Activated T-helper 1 cell treated with anti-CD3 and anti-CD28 coated beads, Interleukin-12 subunit alpha, Interleukin-12 subunit beta, Interleukin-2, Interleukin-4 antibody, amounts not matched to agents 30 ng/mL and 10 ng/mL and 1 ng/mL, durations not matched to agents 14 hours and 24 hours and 36 hours (primary cell): ENCODE measurements at regions of chr3 and their contacts with region 1.

Region 1: DNA sequence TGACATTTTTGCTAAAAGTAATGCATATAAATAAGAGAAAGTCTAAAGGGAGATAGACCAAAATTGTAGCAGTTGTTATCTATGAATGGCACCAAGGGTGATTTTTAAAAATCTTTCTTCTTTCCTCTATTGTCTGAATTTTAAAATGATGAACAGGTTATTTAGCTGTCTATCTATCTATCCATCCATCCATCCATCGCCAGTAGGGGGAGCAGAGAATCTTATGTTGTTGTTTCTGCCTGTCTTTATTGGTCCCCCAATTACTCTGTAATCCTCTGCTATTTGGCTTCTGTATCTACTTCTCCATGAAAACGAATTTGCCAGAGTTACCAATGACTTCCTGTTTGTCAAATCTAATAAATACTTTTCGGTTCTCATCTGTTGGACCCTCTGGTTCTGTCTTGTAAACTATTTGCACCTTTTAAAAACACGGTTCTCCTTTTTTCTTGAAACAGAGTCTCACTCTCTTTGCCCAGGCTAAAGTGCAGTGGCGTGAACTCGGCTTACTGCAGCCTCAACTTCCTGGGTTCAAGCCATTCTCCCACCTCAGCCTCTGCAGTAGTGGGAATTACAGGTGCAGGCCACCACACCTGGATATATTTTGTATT is 86.0 kb downstream of the ECT2 start:
- DNase-seq: no peak
- H3K4me3 Mint-ChIP-seq: no peak overlapping the region
- H3K27ac Mint-ChIP-seq: no peak overlapping the region
- H3K4me1 Mint-ChIP-seq: no peaks in the 10 kb centered on the region
- H3K27me3 Mint-ChIP-seq: peaks cover 15% of the 10 kb centered on the region

Region 2: DNA sequence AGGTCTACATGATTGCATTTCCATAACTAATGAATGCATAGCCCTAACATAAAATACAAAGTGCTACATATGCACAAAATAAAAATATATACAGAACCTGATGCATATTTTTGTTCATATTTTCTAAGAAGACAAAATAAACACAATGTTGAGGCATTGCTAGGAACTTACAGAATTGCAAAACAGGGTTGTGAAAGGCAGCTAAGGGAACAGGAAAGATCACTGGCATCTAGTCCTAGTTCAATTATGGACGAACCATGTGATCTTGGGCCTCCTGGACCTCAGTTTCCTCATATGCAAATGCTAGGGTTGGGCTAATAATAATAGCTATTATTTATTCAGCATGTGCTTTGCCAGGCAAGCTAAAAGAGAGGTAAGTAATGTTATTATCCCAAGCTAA is 110.1 kb before region 1 on chr3:
- intact Hi-C with region 1: no loop called
- DNase-seq: no peak
- H3K4me3 Mint-ChIP-seq: no peak overlapping the region
- H3K27ac Mint-ChIP-seq: no peak overlapping the region
- H3K4me1 Mint-ChIP-seq: no peaks in the 10 kb centered on the region
- H3K27me3 Mint-ChIP-seq: peaks cover 30% of the 10 kb centered on the region

Region 3: GRCh38 chr3:172766241-172766640 is 70.3 kb before region 1 on chr3:
- intact Hi-C with region 1: no loop called
- DNase-seq: no peak
- H3K4me3 Mint-ChIP-seq: no peak overlapping the region
- H3K27ac Mint-ChIP-seq: no peak overlapping the region
- H3K4me1 Mint-ChIP-seq: peaks cover 11% of the 10 kb centered on the region
- H3K27me3 Mint-ChIP-seq: no peaks in the 10 kb centered on the region

Region 4: DNA sequence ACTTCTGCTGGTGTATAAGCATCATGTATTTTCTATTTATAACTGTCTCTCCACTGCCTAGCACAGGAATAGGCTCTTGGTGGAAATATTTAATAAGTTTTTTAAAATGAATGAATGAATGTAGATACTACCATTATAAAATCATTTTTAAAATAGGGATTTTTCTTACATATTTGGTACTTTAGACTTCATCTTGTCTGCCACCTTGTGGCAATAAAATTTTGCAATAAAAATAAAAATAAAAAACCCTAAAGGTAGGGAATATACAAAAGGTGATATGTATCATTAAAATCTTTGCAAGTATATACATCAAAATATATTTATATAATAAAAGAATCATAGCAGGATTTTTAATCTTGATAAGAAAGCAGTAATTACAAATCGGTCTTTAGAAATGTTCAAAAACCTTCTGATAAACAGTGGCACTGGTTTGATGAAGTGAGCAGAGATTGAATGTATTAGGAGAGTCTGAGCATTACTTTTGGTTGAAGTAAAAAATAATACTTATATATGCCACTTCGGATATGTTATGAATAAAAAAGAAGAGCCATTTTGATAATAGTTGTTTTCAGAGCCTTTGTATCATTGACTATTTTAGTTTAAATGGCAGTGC is 209.4 kb after region 1 on chr3:
- intact Hi-C with region 1: loop called (anchors 10 kb)
- DNase-seq: no peak
- H3K4me3 Mint-ChIP-seq: no peak overlapping the region
- H3K27ac Mint-ChIP-seq: no peak overlapping the region
- H3K4me1 Mint-ChIP-seq: no peaks in the 10 kb centered on the region
- H3K27me3 Mint-ChIP-seq: peaks cover 2% of the 10 kb centered on the region